Breast epithelium (tissue), 4 donors: ENCODE measurements at regions of chr5 and their contacts with region 1.

Region 1: GRCh38 chr5:150525163-150525562 is 17.2 kb downstream of the NDST1 start:
- DNase-seq: no peak
- H3K4me3 ChIP-seq: no peak overlapping the region
- H3K27ac ChIP-seq: peak overlapping the region; percentile 15 to 62
- H3K4me1 ChIP-seq: peaks cover 4 to 15% of the 10 kb centered on the region in 2 donors
- H3K27me3 ChIP-seq: no peaks in the 10 kb centered on the region
- CTCF ChIP-seq: no peak
- POLR2A ChIP-seq: no peak

Region 2: GRCh38 chr5:149114403-149115312 is 1410.5 kb before region 1 on chr5:
- intact Hi-C with region 1: no loop called
- DNase-seq: peak in 1 of 2 donors; percentile 50
- H3K4me3 ChIP-seq: no peak overlapping the region
- H3K27ac ChIP-seq: peak overlapping the region in 1 of 2 donors; percentile 31
- H3K4me1 ChIP-seq: no peaks in the 10 kb centered on the region
- H3K27me3 ChIP-seq: no peaks in the 10 kb centered on the region
- CTCF ChIP-seq: peak in 2 of 3 donors; percentile 61 to 75
- POLR2A ChIP-seq: no peak

Region 3: DNA sequence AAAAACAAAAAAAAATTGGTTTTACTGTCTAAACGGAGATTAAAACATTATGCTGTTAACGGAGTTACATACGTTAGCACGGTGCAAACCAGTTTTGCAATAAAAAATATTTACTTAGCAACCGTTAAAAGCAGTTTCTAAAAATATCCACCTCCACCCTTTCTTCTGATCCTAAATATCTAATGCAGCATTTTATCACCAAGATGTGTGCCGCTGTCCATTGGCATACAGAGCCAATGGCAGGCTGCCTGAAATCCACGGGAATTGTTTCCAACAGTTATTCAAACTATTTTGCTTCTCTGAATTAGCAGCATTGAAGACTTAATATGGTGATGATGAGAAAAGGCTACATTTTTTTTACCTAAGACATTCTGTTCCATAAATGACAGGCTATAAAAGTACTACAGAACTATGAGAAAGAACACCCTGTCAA is 1035.5 kb before region 1 on chr5:
- intact Hi-C with region 1: no loop called
- DNase-seq: peak in 1 of 2 donors; percentile 77
- H3K4me3 ChIP-seq: no peak overlapping the region
- H3K27ac ChIP-seq: peak overlapping the region; percentile 97 to 98
- H3K4me1 ChIP-seq: peaks cover 11 to 40% of the 10 kb centered on the region in 2 donors
- H3K27me3 ChIP-seq: no peaks in the 10 kb centered on the region
- CTCF ChIP-seq: no peak
- POLR2A ChIP-seq: no peak

Region 4: GRCh38 chr5:150486402-150487198 is 38.6 kb before region 1 on chr5:
- intact Hi-C with region 1: loop called (anchors 1 kb)
- DNase-seq: peak; percentile 77 to 87
- H3K4me3 ChIP-seq: peak overlapping the region; percentile 85 to 97 (median 95)
- H3K27ac ChIP-seq: peak overlapping the region; percentile 98
- H3K4me1 ChIP-seq: peaks cover 20 to 39% of the 10 kb centered on the region in 2 donors
- H3K27me3 ChIP-seq: no peaks in the 10 kb centered on the region
- CTCF ChIP-seq: no peak
- POLR2A ChIP-seq: no peak

Region 5: DNA sequence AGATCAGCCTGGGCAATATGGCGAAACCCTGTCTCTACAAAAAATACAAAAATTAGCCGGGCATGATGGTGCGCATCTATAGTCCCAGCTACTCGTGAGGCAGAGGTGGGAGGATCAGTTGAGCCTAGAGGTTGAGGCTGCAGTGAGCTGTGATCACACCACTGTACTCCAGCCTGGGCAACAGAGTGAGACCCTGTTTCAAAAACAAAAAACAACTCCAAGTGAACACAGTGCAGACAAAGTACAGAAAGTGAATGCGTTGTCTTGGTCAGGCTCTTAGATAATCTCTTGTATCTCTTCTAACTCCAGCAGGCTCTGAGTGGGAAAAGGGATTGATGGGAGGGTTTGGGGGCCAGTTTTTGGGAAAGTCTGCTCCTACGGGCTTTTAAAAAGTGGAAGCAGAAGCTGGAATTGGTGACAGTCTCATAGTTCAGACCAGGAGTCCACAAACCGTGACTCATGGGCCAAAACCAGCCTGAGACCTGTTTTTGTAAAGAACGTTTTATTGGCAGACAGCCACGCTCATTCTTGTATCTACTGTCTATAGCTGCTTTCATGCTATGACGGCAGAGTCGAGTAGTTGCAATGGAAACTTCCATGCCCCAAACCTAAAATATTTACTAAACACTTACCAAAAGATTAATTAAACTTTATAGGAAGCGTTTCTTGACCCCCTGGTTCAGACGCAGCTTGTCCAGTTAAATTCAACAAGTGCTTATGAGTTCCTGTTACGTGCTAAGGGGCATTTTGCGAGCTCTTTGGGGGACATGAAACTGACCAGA is 15.6 kb after region 1 on chr5:
- intact Hi-C with region 1: no loop called
- DNase-seq: peak; percentile 68 to 81
- H3K4me3 ChIP-seq: no peak overlapping the region
- H3K27ac ChIP-seq: peak overlapping the region; percentile 82 to 84
- H3K4me1 ChIP-seq: no peaks in the 10 kb centered on the region
- H3K27me3 ChIP-seq: no peaks in the 10 kb centered on the region
- CTCF ChIP-seq: no peak
- POLR2A ChIP-seq: no peak

Region 6: GRCh38 chr5:150836703-150837102 is 311.5 kb after region 1 on chr5:
- intact Hi-C with region 1: no loop called
- DNase-seq: no peak
- H3K4me3 ChIP-seq: no peak overlapping the region
- H3K27ac ChIP-seq: no peak overlapping the region
- H3K4me1 ChIP-seq: no peaks in the 10 kb centered on the region
- H3K27me3 ChIP-seq: no peaks in the 10 kb centered on the region
- CTCF ChIP-seq: no peak
- POLR2A ChIP-seq: no peak